A549 (cell line): ENCODE measurements at regions of chr11 and their contacts with region 1.

Region 1: DNA sequence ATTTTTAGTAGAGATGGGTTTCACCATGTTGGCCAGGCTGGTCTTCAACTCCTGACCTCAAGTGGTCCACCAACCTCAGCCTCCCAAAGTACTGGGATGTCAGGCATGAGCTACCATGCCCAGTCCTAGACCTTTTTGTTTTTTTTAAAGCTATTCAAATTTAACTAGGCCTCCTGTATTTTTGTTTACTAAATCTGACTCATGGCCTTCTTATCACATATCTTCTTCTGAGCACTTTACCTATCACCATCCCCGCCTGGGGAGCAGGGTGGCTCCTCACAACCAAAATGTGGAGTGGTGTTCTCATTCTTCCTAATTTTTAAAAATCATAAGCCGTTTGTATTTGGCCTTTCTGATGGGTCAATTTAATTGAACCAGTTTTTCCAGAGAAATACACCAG is 92.6 kb downstream of the DBX1 start:
- DNase-seq: no peak
- ATAC-seq: no peak
- H3K4me3 ChIP-seq: no peak overlapping the region
- H3K27ac ChIP-seq: peak overlapping the region in 1 of 2 experiments; percentile 8; a peak in 1 of 6 replicates
- H3K4me1 ChIP-seq: peaks cover 17% of the 10 kb centered on the region
- CTCF ChIP-seq: no peak
- EP300 ChIP-seq: no peak
- POLR2A ChIP-seq: no peak
- RAD21 ChIP-seq: no peak

Region 2: GRCh38 chr11:20089796-20090653 is 22.4 kb after region 1 on chr11:
- CTCF ChIA-PET with region 1: interaction called, 3 read pairs
- POLR2A ChIA-PET with region 1: interaction called, 11 read pairs
- DNase-seq: no peak
- ATAC-seq: no peak
- H3K4me3 ChIP-seq: no peak overlapping the region
- H3K27ac ChIP-seq: no peak overlapping the region; a peak in 1 of 6 replicates
- H3K4me1 ChIP-seq: peaks cover 11% of the 10 kb centered on the region; the same call in 2 of the 3 replicates
- CTCF ChIP-seq: no peak
- EP300 ChIP-seq: no peak
- POLR2A ChIP-seq: no peak
- RAD21 ChIP-seq: no peak

Region 3: DNA sequence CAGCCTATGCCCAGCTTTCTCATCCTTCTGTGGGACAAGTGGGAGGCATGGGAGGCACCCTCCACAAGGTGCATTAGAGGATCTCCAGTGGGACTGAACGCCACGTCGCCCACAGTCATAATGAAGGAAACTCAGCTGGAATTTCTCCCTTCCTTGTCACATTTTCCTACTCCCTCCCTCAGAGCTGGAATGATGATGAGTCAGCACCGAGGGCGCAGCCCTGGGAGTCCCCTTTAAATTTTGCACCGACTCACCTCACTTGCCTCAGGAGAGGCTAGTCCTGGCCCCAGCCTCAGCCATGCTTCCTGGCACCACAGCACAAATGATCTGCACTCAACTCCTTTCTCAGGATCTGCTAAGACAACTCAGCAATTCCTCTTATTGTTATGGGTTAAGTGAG is 58.3 kb after region 1 on chr11:
- CTCF ChIA-PET with region 1: no interaction called
- POLR2A ChIA-PET with region 1: no interaction called
- DNase-seq: peak; percentile 25 to 29
- ATAC-seq: peak; percentile 31 to 33; a peak in 3 of 6 replicates
- H3K4me3 ChIP-seq: no peak overlapping the region
- H3K27ac ChIP-seq: peak overlapping the region; percentile 51 to 75; a peak in 5 of 6 replicates
- H3K4me1 ChIP-seq: peaks cover 12% of the 10 kb centered on the region; the same call in 2 of the 3 replicates
- CTCF ChIP-seq: no peak
- EP300 ChIP-seq: 0 out of 5 replicates have a peak, but pooled peaks of 1 of the 2 experiments have one; percentile 15
- POLR2A ChIP-seq: no peak
- RAD21 ChIP-seq: no peak

Region 4: GRCh38 chr11:20754933-20755332 is 687.3 kb after region 1 on chr11:
- CTCF ChIA-PET with region 1: no interaction called
- POLR2A ChIA-PET with region 1: no interaction called
- DNase-seq: peak in 1 of 2 experiments; percentile 9
- ATAC-seq: 0 out of 6 replicates have a peak, but pooled peaks of 1 of the 2 experiments have one; percentile 30
- H3K4me3 ChIP-seq: no peak overlapping the region
- H3K27ac ChIP-seq: no peak overlapping the region
- H3K4me1 ChIP-seq: no peaks in the 10 kb centered on the region
- CTCF ChIP-seq: no peak
- EP300 ChIP-seq: no peak
- POLR2A ChIP-seq: no peak
- RAD21 ChIP-seq: no peak